A673 (cell line): ENCODE measurements at regions of chr17 and their contacts with region 1.

Region 1: GRCh38 chr17:74296548-74296936 is 22.5 kb downstream of the DNAI2 start:
- DNase-seq: peak; percentile 48
- H3K4me3 ChIP-seq: no peak overlapping the region
- H3K27ac ChIP-seq: no peak overlapping the region
- H3K4me1 ChIP-seq: no peaks in the 10 kb centered on the region
- H3K27me3 ChIP-seq: no peaks in the 10 kb centered on the region
- CTCF ChIP-seq: peak; percentile 58

Region 2: DNA sequence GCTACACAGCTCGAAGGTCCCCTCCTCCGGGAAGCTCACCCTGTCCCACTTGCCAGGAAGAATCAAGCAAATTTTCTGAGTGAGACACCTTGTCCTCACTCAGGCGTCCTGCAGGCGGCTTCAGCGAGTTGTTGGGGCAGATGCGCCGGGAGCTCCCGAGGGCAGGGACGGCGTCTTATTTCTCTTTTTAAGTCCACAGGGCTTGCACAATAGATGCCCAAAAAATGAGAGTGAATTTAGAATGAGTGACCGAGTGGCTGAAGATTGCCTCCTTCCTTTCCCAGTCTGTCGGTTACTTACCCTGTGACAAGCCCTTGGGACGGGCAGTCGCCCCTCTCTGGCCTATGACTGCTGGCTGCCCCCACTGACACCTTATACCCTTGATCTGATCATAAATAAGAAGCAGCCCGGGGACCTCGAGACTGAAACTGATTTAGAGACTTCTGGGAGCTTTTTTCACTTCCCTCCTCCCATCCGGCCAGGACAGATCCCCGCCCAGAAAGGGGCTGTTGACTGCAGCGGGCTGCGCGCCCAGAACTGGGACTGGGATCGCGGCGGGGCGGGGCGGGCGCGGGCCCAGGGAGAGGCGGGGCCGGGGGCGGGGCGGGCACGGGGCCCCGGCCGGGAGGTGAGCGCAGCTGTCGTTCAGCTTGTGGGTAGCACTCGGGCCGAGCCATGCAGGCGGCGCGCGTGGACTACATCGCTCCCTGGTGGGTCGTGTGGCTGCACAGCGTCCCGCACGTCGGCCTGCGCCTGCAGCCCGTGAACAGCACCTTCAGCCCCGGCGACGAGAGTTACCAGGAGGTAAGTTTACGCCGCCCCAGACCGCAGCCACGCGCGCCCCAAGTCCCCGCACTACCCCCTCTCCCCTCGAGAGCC is 83.4 kb before region 1 on chr17 and contains the start of gene TTYH2:
- CTCF ChIA-PET with region 1: interaction called, 4 read pairs
- POLR2A ChIA-PET with region 1: no interaction called
- intact Hi-C with region 1: loop called (anchors 5 kb)
- DNase-seq: peak; percentile 95
- H3K4me3 ChIP-seq: peak within 1 kb of the TSS; percentile 66
- H3K27ac ChIP-seq: peak within 1 kb of the TSS; percentile 67
- H3K4me1 ChIP-seq: peaks cover 21% of the 10 kb centered on the region
- H3K27me3 ChIP-seq: no peaks in the 10 kb centered on the region
- CTCF ChIP-seq: peak; percentile 31; the same call in 1 of the 2 replicates
- total RNA-seq, gene TTYH2: 13.7 and 15.4 TPM in 2 replicates

Region 3: DNA sequence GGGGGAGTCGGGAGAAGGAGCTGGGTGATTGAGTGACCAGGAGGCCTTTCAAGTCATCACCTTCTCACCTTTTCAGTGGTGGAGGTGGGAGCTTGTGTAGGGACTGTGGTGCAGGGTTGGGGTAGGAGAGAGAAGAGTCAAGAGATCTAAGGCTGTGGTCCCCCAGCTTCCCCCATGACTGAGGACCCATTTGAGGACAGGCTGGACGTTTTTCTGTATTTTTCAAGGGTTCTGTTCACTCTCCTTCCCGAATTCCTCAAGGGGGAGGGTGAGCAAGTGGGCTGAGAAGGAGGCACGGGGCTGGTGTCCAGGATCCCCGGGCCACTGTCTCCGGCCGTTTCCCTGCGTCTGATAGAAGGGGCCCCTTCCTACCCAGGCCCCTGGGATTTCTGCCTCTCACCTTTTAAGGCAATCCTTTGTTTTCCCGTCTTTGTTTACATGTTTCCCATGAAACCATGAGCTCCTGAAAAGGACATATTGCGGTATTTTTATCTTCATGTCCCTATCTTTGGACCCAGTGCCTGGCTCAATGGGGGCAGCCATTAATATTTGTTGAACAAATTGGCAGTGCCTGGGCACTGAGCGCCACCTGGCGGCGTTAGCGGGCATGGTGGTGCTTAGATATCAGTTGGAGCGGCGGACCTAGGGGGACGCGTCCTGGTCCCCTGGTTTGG is 160.7 kb after region 1 on chr17:
- CTCF ChIA-PET with region 1: interaction called, 4 read pairs
- POLR2A ChIA-PET with region 1: no interaction called
- intact Hi-C with region 1: loop called (anchors 1 kb)
- DNase-seq: peak; percentile 81
- H3K4me3 ChIP-seq: no peak overlapping the region
- H3K27ac ChIP-seq: no peak overlapping the region
- H3K4me1 ChIP-seq: peaks cover 37% of the 10 kb centered on the region
- H3K27me3 ChIP-seq: no peaks in the 10 kb centered on the region
- CTCF ChIP-seq: peak; percentile 97

Region 4: GRCh38 chr17:74493381-74493833 is 196.9 kb after region 1 on chr17:
- CTCF ChIA-PET with region 1: no interaction called
- POLR2A ChIA-PET with region 1: no interaction called
- intact Hi-C with region 1: loop called (anchors 2 kb)
- DNase-seq: peak; percentile 70
- H3K4me3 ChIP-seq: no peak overlapping the region
- H3K27ac ChIP-seq: no peak overlapping the region
- H3K4me1 ChIP-seq: no peaks in the 10 kb centered on the region
- H3K27me3 ChIP-seq: peaks cover 11% of the 10 kb centered on the region
- CTCF ChIP-seq: peak; percentile 85